Aorta (tissue), 5 donors: ENCODE measurements at regions of chr22 and their contacts with region 1.

Region 1: DNA sequence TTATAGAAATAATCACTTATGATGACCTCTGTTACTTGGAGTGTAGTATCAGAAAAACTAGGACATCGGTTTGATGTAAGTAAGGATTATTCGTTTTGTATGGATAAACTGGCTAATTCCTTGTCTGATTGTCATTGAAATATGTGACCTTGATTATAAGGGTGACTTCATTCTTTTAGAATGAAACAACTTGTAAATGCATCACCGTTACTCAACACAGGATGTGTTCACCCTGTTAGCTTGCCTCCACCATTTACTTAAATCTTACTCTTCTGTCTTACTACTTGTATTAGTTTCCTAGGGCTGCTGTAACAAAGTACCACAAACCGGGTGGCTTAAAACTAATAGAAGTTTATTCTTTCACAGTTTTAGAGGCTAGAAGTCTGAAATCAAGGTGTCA is 7.9 kb downstream of the SFI1 start:
- DNase-seq: no peak
- ATAC-seq: no peak
- H3K4me3 ChIP-seq: no peak overlapping the region
- H3K27ac ChIP-seq: no peak overlapping the region
- H3K4me1 ChIP-seq: no peaks in the 10 kb centered on the region
- H3K27me3 ChIP-seq: no peaks in the 10 kb centered on the region

Region 2: DNA sequence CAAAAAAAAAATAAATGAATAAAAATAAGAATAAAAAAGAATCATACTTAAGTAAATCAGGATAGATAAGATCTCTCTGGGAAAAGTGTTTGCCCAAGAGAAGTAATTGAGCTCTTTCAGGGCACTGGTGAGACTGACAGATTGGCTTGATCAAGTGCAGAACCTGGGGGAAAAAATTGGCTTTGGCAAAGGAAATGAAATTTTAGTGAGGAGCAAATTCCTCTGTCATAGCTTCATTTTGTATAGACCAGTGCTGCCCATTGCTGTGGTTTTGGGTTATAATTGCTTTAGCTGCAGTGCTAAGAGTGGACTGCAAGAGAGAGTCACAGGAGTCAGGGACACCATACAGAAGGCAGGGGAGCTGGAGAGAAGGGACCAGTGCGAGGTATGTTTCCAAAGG is 27.8 kb after region 1 on chr22:
- intact Hi-C with region 1: loop called in 1 of 2 experiments (anchors 2 kb)
- DNase-seq: no peak
- ATAC-seq: no peak
- H3K4me3 ChIP-seq: no peak overlapping the region
- H3K27ac ChIP-seq: no peak overlapping the region
- H3K4me1 ChIP-seq: peaks cover 0 to 3% of the 10 kb centered on the region in 2 donors
- H3K27me3 ChIP-seq: no peaks in the 10 kb centered on the region

Region 3: DNA sequence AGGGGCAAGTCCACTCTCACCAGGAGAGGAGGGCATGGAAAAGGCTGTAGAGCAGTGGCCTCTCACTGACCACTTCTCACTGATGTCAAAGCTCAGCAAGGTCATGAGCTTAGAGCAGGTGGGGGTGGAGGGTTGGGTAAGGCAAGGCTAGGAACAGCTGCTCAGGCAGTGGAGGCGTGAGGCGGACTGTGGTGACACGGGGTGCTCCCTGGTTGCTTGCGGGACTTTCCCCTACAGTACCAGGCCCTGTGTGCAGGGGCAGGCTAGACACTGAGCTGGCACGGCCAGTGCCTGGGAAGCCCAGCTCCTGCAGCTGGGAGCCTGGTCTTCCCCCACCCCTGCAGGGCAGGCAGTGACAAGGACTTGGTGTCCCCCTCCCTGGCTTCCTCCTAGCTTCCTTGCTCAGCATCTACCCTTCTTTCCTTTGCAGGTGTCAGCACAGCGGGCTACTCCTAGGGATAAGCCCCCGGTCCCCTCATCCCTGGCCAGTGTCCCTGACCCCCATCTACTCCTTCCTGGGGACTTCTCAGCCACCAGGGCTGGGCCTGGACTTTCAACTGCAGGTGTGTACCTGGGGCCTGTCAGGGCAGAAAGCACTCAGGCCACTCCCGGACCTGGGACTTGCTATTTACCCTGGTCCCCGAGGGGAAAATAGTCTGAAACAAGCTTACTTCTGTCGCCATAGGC is 112.2 kb after region 1 on chr22:
- intact Hi-C with region 1: no loop called
- DNase-seq: no peak
- ATAC-seq: no peak
- H3K4me3 ChIP-seq: no peak overlapping the region
- H3K27ac ChIP-seq: no peak overlapping the region
- H3K4me1 ChIP-seq: no peaks in the 10 kb centered on the region
- H3K27me3 ChIP-seq: no peaks in the 10 kb centered on the region